Caco-2 (cell line): ENCODE measurements at regions of chr10 and their contacts with region 1.

Region 1: GRCh38 chr10:95273393-95274312 is 17.1 kb downstream of the PDLIM1 start:
- DNase-seq: peak; percentile 78 to 84
- H3K4me3 ChIP-seq: no peak overlapping the region
- H3K4me3 Mint-ChIP-seq: peak overlapping the region; percentile 54
- H3K27ac Mint-ChIP-seq: peak overlapping the region; percentile 91
- H3K4me1 ChIP-seq: peaks cover 67% of the 10 kb centered on the region
- H3K4me1 Mint-ChIP-seq: peaks cover 59% of the 10 kb centered on the region
- H3K27me3 ChIP-seq: no peaks in the 10 kb centered on the region
- H3K27me3 Mint-ChIP-seq: no peaks in the 10 kb centered on the region
- CTCF ChIP-seq: no peak

Region 2: DNA sequence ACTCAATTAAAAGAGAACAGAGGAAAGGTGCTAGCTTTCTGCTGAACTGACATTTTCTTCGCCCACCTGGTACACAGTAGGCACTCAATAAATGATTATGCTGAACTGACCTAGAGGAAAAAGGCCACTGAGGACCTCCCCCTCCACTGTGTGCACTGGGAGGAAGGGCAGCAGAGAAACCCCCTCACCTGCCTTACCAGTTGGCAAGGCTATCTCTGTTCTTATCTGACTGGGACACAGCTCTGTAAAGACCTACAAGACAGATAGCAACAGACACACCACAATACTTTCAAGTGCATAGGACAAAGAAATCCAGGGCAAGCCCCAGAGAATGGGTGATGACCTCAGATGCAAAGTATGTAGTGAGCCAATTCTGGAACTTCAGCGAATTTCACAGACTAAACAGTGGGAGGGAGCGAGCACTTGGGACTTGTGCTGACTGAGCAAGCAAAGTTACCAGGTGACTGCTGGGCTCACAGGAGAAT is 13.2 kb before region 1 on chr10:
- CTCF ChIA-PET with region 1: interaction called, 4 read pairs
- POLR2A ChIA-PET with region 1: no interaction called
- intact Hi-C with region 1: loop called (anchors 1 kb)
- DNase-seq: peak; percentile 82 to 87
- H3K4me3 ChIP-seq: no peak overlapping the region
- H3K4me3 Mint-ChIP-seq: no peak overlapping the region
- H3K27ac Mint-ChIP-seq: peak overlapping the region; percentile 75
- H3K4me1 ChIP-seq: peaks cover 54% of the 10 kb centered on the region
- H3K4me1 Mint-ChIP-seq: peaks cover 54% of the 10 kb centered on the region
- H3K27me3 ChIP-seq: no peaks in the 10 kb centered on the region
- H3K27me3 Mint-ChIP-seq: no peaks in the 10 kb centered on the region
- CTCF ChIP-seq: no peak

Region 3: DNA sequence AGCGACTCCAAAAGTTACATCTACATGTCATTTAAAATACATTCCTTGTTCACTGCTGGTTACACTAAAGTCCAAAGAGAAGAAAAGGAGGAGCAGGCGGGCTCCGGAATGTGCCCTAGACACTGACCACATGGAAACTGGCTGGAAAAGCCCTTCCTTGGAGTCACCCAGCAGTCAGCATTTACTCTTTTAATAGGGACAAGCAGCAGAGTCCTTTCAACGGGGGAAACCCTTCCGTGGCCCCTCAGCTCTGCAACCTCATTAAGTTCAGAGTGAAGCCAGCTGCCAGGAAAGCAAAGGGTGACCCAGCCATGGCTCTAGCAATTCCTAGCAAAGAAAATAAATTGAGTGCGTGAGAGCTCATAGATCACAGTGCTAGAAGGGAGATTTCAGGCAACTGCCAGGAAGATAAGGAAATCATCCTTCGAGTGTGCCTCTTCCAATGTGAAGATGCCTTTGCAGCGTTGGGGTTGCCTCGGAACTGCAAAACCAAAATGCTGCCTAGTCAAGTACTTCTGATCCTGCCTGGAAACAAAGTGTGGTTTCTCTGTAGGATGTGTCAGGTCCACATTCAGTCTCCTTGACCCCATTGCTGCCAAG is 185.9 kb after region 1 on chr10:
- CTCF ChIA-PET with region 1: no interaction called
- POLR2A ChIA-PET with region 1: no interaction called
- intact Hi-C with region 1: no loop called
- DNase-seq: no peak
- H3K4me3 ChIP-seq: no peak overlapping the region
- H3K4me3 Mint-ChIP-seq: no peak overlapping the region
- H3K27ac Mint-ChIP-seq: no peak overlapping the region
- H3K4me1 ChIP-seq: peaks cover 7% of the 10 kb centered on the region
- H3K4me1 Mint-ChIP-seq: peaks cover 9% of the 10 kb centered on the region
- H3K27me3 ChIP-seq: no peaks in the 10 kb centered on the region
- H3K27me3 Mint-ChIP-seq: no peaks in the 10 kb centered on the region
- CTCF ChIP-seq: no peak